Common myeloid progenitor, CD34-positive (primary cell): ENCODE measurements at regions of chr19 and their contacts with region 1.

Region 1: GRCh38 chr19:19531951-19532805 is 3.5 kb downstream of the YJEFN3 start:
- DNase-seq: peak; percentile 57 to 76 (median 71)
- H3K4me3 ChIP-seq: no peak overlapping the region
- H3K27ac ChIP-seq: no peak overlapping the region
- H3K4me1 ChIP-seq: peaks cover 0 to 6% (median 2%) of the 10 kb centered on the region in 4 experiments
- H3K27me3 ChIP-seq: peaks cover 0 to 4% (median under 1%) of the 10 kb centered on the region in 5 experiments

Region 2: GRCh38 chr19:19554074-19555023 is 22.2 kb after region 1 on chr19:
- CTCF ChIA-PET with region 1: interaction called, 29 read pairs
- POLR2A ChIA-PET with region 1: no interaction called
- DNase-seq: no peak
- H3K4me3 ChIP-seq: no peak overlapping the region
- H3K27ac ChIP-seq: no peak overlapping the region
- H3K4me1 ChIP-seq: no peaks in the 10 kb centered on the region
- H3K27me3 ChIP-seq: no peaks in the 10 kb centered on the region

Region 3: GRCh38 chr19:19643158-19644053 is 111.2 kb after region 1 on chr19 and contains the start of gene GMIP:
- CTCF ChIA-PET with region 1: interaction called, 23 read pairs
- POLR2A ChIA-PET with region 1: interaction called, 6 read pairs
- DNase-seq: peak; percentile 58 to 78 (median 75)
- H3K4me3 ChIP-seq: peak within 1 kb of the TSS; percentile 78 to 95 (median 87)
- H3K27ac ChIP-seq: peak within 1 kb of the TSS; percentile 50 to 81
- H3K4me1 ChIP-seq: peaks cover 0 to 19% (median 13%) of the 10 kb centered on the region in 4 experiments
- H3K27me3 ChIP-seq: no peaks in the 10 kb centered on the region

Region 4: DNA sequence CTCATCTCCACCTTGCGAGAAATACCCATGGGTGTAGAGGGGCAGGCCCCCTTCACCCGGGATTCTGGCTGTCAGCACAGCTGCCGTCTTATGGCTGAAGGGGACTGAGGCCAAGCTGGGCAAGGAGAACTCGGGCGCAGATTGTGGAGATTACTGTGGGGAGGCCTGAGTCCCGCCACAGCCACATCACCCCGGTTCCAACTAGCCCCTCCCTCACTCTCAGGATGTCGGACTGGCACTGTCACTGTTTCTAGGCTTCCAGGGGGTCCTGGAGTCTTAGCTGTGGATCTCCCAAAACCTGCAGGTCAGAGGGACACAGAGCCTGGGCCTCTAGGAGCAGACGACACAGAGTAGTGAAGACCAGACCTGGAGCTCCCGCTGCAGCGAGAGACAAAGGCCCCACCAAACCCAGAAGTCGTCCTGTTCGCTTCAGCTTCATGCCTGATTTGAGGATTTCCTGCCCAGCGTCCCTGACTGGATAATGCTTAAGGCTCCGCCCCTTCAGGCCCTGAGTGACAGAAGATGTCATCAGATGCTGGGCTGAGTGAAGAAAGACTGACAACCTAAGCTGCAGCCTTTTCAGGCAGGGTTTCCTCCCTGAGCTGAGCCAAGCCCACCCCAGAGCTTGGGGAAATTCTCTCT is 424.4 kb after region 1 on chr19:
- CTCF ChIA-PET with region 1: interaction called, 17 read pairs
- POLR2A ChIA-PET with region 1: interaction called, 4 read pairs
- DNase-seq: peak in 2 of 3 donors; percentile 2
- H3K4me3 ChIP-seq: no peak overlapping the region
- H3K27ac ChIP-seq: no peak overlapping the region
- H3K4me1 ChIP-seq: no peaks in the 10 kb centered on the region
- H3K27me3 ChIP-seq: no peaks in the 10 kb centered on the region